HEK293 (cell line): ENCODE measurements at regions of chr11 and their contacts with region 1.

Region 1: DNA sequence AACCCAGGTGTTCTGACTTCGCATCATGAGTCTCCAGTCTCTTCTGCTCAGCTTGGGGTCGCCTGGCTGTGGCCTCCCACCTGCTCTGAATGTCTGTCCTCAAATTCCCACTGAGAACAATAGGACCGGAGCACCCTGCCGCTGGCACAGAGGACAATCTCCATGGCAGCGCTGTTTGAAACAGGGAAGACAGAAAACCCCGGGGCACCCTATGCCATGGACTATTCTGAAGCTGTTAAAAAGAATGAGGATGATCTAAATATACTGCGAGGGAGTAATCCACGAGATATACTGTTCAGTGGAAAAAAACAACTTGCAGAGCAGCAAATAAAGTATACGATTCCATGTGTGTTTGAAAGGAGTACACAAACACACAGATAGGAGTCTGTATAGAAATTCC is 415.6 kb upstream of the NARS2 start:
- H3K4me3 ChIP-seq: no peak overlapping the region
- H3K27ac ChIP-seq: no peak overlapping the region
- H3K4me1 ChIP-seq: no peaks in the 10 kb centered on the region
- CTCF ChIP-seq: no peak

Region 2: GRCh38 chr11:78832226-78832947 is 157.9 kb before region 1 on chr11:
- CTCF ChIA-PET with region 1: no interaction called
- POLR2A ChIA-PET with region 1: no interaction called
- H3K4me3 ChIP-seq: no peak overlapping the region
- H3K27ac ChIP-seq: no peak overlapping the region
- H3K4me1 ChIP-seq: no peaks in the 10 kb centered on the region
- CTCF ChIP-seq: no peak

Region 3: GRCh38 chr11:79273781-79274180 is 283.5 kb after region 1 on chr11:
- CTCF ChIA-PET with region 1: interaction called, 10 read pairs
- POLR2A ChIA-PET with region 1: no interaction called
- H3K4me3 ChIP-seq: no peak overlapping the region
- H3K27ac ChIP-seq: no peak overlapping the region
- H3K4me1 ChIP-seq: no peaks in the 10 kb centered on the region
- CTCF ChIP-seq: no peak